Upper lobe of right lung (tissue), 1 donor: ENCODE measurements at regions of chrX and their contacts with region 1.

Region 1: DNA sequence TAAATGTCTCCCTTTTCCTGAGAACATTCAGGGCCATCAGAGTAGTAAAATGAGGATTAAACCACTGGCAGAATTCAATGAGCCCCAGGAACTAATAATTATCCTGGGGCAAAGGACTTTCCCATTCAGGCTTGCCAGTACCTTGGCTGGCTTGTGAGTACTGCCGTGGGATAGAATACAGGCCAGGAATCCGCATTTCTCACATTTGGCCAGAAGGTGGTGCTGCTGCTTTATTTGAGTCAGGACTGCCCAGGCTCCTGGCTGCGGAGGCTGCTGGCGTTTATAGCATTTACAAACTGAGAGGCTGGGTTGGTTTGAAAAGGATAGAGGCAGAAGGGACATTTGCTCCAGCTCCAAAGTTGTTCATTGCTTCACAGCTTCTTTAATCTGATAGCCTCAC is 91.4 kb downstream of the RTL9 start:
- DNase-seq: peak; percentile 68
- ATAC-seq: peak; percentile 94
- H3K4me3 ChIP-seq: no peak overlapping the region
- H3K27ac ChIP-seq: no peak overlapping the region
- H3K4me1 ChIP-seq: no peaks in the 10 kb centered on the region
- H3K27me3 ChIP-seq: no peaks in the 10 kb centered on the region
- CTCF ChIP-seq: peak; percentile 62

Region 2: DNA sequence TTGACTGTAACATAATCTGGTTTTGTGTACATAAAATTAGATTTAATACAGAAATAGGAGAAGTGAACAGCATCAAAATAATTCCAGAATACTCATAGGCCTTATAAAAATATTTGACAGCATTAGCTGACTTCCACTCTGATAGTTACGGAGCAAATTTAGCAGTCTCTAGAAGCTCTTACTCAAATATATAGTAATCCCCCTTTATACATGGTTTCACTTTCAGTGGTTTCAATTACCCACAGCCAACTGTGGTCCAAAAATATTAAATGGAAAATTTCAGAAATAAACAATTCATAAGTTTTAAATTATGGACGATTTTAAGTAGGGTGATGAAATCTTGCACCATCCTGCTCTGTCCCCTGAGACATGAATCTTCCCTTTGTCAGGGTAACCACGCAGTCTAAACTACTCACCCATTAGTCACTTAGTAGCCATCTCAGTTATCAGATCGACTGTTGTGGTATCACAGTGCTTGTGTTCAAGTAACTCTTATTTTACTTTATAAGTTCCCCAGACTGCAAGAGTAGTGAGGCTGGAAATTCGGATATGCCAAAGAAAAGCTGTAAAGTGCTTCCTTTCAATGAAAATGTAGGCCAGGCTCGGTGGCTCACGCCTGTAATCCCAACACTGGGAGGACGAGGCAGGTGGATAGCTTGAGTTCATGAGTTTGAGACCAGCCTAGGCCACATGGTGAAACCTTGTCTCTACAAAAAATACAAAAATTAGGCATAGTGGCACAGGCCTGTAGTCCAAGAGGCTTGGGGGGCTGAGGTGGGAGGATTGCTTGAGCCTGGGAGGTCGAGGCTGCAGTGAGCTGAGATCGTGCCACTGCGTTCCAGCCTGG is 108.6 kb before region 1 on chrX:
- intact Hi-C with region 1: no loop called
- DNase-seq: no peak
- ATAC-seq: no peak
- H3K4me3 ChIP-seq: no peak overlapping the region
- H3K27ac ChIP-seq: no peak overlapping the region
- H3K4me1 ChIP-seq: no peaks in the 10 kb centered on the region
- H3K27me3 ChIP-seq: no peaks in the 10 kb centered on the region
- CTCF ChIP-seq: no peak

Region 3: DNA sequence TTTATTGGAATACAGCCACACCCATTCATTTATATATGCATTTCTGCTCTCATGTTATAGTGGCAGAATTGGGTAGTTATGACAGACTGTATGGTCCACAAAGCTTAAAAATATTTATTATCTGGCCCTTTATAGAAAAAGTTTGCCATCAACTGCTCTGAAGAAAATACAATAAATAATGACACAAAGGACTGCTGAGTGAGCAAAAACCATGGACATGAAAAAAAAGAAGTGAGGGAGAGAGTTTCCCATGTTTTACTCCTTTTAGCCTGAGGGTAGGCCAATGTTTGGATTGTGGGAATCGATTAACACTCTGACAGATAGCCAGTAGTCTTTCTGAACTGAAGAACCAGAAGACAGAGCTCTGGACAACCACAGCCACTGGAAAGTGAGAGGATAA is 196.3 kb after region 1 on chrX:
- intact Hi-C with region 1: no loop called
- DNase-seq: no peak
- ATAC-seq: no peak
- H3K4me3 ChIP-seq: no peak overlapping the region
- H3K27ac ChIP-seq: no peak overlapping the region
- H3K4me1 ChIP-seq: no peaks in the 10 kb centered on the region
- H3K27me3 ChIP-seq: no peaks in the 10 kb centered on the region
- CTCF ChIP-seq: no peak

Region 4: GRCh38 chrX:110734894-110735541 is 285.0 kb after region 1 on chrX:
- intact Hi-C with region 1: no loop called
- DNase-seq: no peak
- ATAC-seq: no peak
- H3K4me3 ChIP-seq: no peak overlapping the region
- H3K27ac ChIP-seq: no peak overlapping the region
- H3K4me1 ChIP-seq: no peaks in the 10 kb centered on the region
- H3K27me3 ChIP-seq: no peaks in the 10 kb centered on the region
- CTCF ChIP-seq: no peak

Region 5: GRCh38 chrX:110853610-110854009 is 403.6 kb after region 1 on chrX:
- intact Hi-C with region 1: loop called (anchors 5 kb)
- DNase-seq: no peak
- ATAC-seq: no peak
- H3K4me3 ChIP-seq: no peak overlapping the region
- H3K27ac ChIP-seq: no peak overlapping the region
- H3K4me1 ChIP-seq: no peaks in the 10 kb centered on the region
- H3K27me3 ChIP-seq: no peaks in the 10 kb centered on the region
- CTCF ChIP-seq: peak; percentile 21